ENCODE measurements at regions of chr14 and their contacts with region 1.

Region 1: GRCh38 chr14:101458526-101459391 is 102.5 kb upstream of the DIO3 start:
- DNase-seq: no peak
- H3K4me3 Mint-ChIP-seq: no peak overlapping the region
- H3K27ac Mint-ChIP-seq: no peak overlapping the region
- H3K4me1 Mint-ChIP-seq: no peaks in the 10 kb centered on the region
- H3K27me3 Mint-ChIP-seq: peaks cover 53% of the 10 kb centered on the region

Region 2: DNA sequence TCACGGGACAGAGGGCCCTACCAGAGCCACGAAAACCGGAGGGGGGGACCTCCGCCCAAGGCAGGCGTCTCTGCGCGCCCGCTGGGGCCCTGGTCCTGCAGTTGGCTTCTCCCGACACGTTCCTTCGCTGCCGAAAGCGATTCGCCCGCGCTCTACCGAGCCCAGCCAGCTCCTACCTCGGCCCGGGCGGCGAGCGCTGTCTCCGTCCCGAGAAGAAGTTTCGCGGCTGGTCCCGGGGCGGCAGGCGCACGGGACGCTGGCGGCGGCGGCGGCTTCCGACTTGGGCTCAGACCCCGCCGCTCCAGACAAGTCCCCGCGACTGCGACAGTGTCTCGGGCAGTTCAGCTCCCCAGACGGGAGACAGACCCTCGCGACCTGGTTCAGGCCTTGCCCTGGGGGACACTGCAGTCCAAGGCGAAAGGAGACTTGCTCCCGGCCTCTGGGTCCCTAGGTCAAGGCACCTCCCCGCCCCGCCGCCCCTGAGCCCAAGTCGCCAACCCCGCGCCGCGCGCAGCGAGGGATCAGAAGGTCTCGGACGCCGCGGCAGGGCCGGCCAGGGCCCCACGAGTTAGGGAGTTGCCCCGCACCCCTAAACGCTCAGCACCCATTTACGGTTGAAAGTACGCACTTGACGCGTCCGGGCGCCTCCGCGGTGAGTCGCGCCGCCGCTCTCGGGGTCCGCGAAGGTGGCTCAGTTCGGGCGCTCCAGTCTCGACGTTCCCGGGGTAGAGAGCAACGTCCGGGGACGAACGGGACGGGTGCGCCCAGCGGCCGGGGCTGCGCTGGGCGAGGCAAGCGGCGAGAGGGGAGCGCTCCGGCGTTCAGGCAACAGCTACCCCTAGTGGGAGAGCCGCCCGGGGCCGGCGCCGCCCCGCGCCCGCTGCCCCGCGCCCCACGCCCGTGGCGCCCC is 101.1 kb after region 1 on chr14:
- intact Hi-C with region 1: loop called (anchors 10 kb)
- DNase-seq: no peak
- H3K4me3 Mint-ChIP-seq: no peak overlapping the region
- H3K27ac Mint-ChIP-seq: no peak overlapping the region
- H3K4me1 Mint-ChIP-seq: no peaks in the 10 kb centered on the region
- H3K27me3 Mint-ChIP-seq: peaks cover 33% of the 10 kb centered on the region